ENCODE measurements at regions of chr10 and their contacts with region 1.

Region 1: GRCh38 chr10:48614481-48615390 is 9.9 kb upstream of the ARHGAP22 start:
- DNase-seq: peak; percentile 34
- ATAC-seq: peak; percentile 70; the same call in 1 of the 2 replicates
- H3K4me3 ChIP-seq: peak overlapping the region; percentile 34; the same call in 1 of the 2 replicates
- H3K27ac ChIP-seq: no peak overlapping the region
- H3K4me1 ChIP-seq: peaks cover 6% of the 10 kb centered on the region; the same call in 1 of the 2 replicates
- H3K27me3 ChIP-seq: no peaks in the 10 kb centered on the region
- CTCF ChIP-seq: peak; percentile 32; the same call in 1 of the 2 replicates
- POLR2A ChIP-seq: no peak
- RAD21 ChIP-seq: no peak

Region 2: GRCh38 chr10:48625826-48626134 is 11.0 kb after region 1 on chr10:
- CTCF ChIA-PET with region 1: interaction called, 12 read pairs
- POLR2A ChIA-PET with region 1: no interaction called
- dilution Hi-C with region 1: no loop called
- in situ Hi-C with region 1: no loop called
- intact Hi-C with region 1: no loop called
- DNase-seq: no peak
- ATAC-seq: no peak
- H3K4me3 ChIP-seq: no peak overlapping the region
- H3K27ac ChIP-seq: no peak overlapping the region
- H3K4me1 ChIP-seq: peaks cover 2% of the 10 kb centered on the region; the same call in 1 of the 2 replicates
- H3K27me3 ChIP-seq: no peaks in the 10 kb centered on the region
- CTCF ChIP-seq: no peak
- POLR2A ChIP-seq: no peak
- RAD21 ChIP-seq: no peak